ENCODE measurements at regions of chr12 and their contacts with region 1.

Region 1: DNA sequence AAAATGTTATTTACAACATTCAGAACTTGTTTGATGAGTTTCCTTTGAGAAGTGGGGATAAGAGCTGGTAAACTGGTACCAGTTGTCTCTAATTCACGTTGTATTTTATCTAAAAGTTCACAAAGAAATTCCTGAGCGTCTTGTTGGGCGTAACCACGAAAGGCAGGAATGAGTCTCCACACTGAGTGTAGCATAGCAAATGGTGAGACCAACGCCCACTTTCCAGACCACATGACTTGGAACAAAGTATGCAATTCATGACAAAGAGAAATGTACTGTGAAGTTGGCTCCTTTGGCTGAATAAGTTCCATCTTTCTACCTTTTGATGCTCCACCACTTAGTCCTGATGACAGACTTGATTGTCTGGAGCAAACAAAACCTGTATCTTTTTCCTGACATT is 18.4 kb downstream of the USP44 start:
- DNase-seq: no peak
- H3K4me3 ChIP-seq: no peak overlapping the region
- H3K4me3 Mint-ChIP-seq: no peak overlapping the region
- H3K27ac Mint-ChIP-seq: no peak overlapping the region
- H3K4me1 ChIP-seq: peaks cover 22% of the 10 kb centered on the region
- H3K4me1 Mint-ChIP-seq: peaks cover 28% of the 10 kb centered on the region
- H3K27me3 ChIP-seq: no peaks in the 10 kb centered on the region
- H3K27me3 Mint-ChIP-seq: no peaks in the 10 kb centered on the region
- CTCF ChIP-seq: no peak

Region 2: GRCh38 chr12:95072900-95073697 is 459.8 kb before region 1 on chr12 and contains the start of gene NR2C1:
- CTCF ChIA-PET with region 1: interaction called, 10 read pairs
- POLR2A ChIA-PET with region 1: no interaction called
- intact Hi-C with region 1: no loop called
- DNase-seq: peak; percentile 96 to 97
- H3K4me3 ChIP-seq: peak within 1 kb of the TSS; percentile 94
- H3K4me3 Mint-ChIP-seq: peak within 1 kb of the TSS; percentile 91
- H3K27ac Mint-ChIP-seq: peak within 1 kb of the TSS; percentile 94
- H3K4me1 ChIP-seq: peaks cover 5% of the 10 kb centered on the region; the same call in 1 of the 2 replicates
- H3K4me1 Mint-ChIP-seq: peaks cover 6% of the 10 kb centered on the region
- H3K27me3 ChIP-seq: no peaks in the 10 kb centered on the region
- H3K27me3 Mint-ChIP-seq: no peaks in the 10 kb centered on the region
- CTCF ChIP-seq: peak in 1 of 2 experiments; percentile 59
- total RNA-seq, gene NR2C1: 49.7 and 51.1 TPM in 2 replicates

Region 3: DNA sequence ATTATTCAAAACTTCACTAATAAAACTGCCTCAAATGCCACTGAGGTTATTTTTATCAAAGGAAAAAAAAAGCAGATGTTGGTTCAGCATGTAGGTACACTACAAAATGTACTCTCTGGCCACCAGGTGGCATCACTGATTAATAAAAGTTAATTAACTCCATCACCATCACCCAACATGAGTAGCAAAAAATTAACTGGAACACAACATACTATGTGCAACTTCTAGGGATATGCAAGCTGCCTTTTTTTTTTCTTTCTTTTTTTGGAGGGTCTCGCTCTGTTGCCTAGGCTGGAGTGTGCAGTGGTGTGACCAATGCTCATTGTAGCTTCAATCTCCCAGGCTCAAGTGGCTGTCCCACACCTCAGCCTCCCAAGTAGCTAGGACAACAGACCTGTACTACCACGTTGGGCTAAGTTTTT is 415.7 kb before region 1 on chr12:
- CTCF ChIA-PET with region 1: interaction called, 18 read pairs
- POLR2A ChIA-PET with region 1: no interaction called
- intact Hi-C with region 1: loop called (anchors 1 kb)
- DNase-seq: peak; percentile 57 to 68
- H3K4me3 ChIP-seq: no peak overlapping the region
- H3K4me3 Mint-ChIP-seq: no peak overlapping the region
- H3K27ac Mint-ChIP-seq: no peak overlapping the region
- H3K4me1 ChIP-seq: 0 out of 2 replicates have a peak, but pooled peaks cover 4% of the 10 kb centered on the region
- H3K4me1 Mint-ChIP-seq: no peaks in the 10 kb centered on the region
- H3K27me3 ChIP-seq: no peaks in the 10 kb centered on the region
- H3K27me3 Mint-ChIP-seq: no peaks in the 10 kb centered on the region
- CTCF ChIP-seq: peak; percentile 48 to 74

Region 4: GRCh38 chr12:95343461-95344230 is 189.2 kb before region 1 on chr12:
- CTCF ChIA-PET with region 1: interaction called, 11 read pairs
- POLR2A ChIA-PET with region 1: no interaction called
- intact Hi-C with region 1: no loop called
- DNase-seq: no peak
- H3K4me3 ChIP-seq: no peak overlapping the region
- H3K4me3 Mint-ChIP-seq: no peak overlapping the region
- H3K27ac Mint-ChIP-seq: peak overlapping the region; percentile 84
- H3K4me1 ChIP-seq: peaks cover 33% of the 10 kb centered on the region
- H3K4me1 Mint-ChIP-seq: peaks cover 36% of the 10 kb centered on the region
- H3K27me3 ChIP-seq: no peaks in the 10 kb centered on the region
- H3K27me3 Mint-ChIP-seq: no peaks in the 10 kb centered on the region
- CTCF ChIP-seq: no peak

Region 5: GRCh38 chr12:95473884-95474659 is 58.8 kb before region 1 on chr12 and contains the start of gene METAP2:
- CTCF ChIA-PET with region 1: interaction called, 10 read pairs
- POLR2A ChIA-PET with region 1: no interaction called
- intact Hi-C with region 1: no loop called
- DNase-seq: peak; percentile 97 to 98
- H3K4me3 ChIP-seq: peak within 1 kb of the TSS; percentile 99
- H3K4me3 Mint-ChIP-seq: peak within 1 kb of the TSS; percentile 93
- H3K27ac Mint-ChIP-seq: peak within 1 kb of the TSS; percentile 97
- H3K4me1 ChIP-seq: peaks cover 13% of the 10 kb centered on the region
- H3K4me1 Mint-ChIP-seq: peaks cover 27% of the 10 kb centered on the region
- H3K27me3 ChIP-seq: no peaks in the 10 kb centered on the region
- H3K27me3 Mint-ChIP-seq: no peaks in the 10 kb centered on the region
- CTCF ChIP-seq: no peak
- total RNA-seq, gene METAP2: 134 and 138 TPM in 2 replicates

Region 6: DNA sequence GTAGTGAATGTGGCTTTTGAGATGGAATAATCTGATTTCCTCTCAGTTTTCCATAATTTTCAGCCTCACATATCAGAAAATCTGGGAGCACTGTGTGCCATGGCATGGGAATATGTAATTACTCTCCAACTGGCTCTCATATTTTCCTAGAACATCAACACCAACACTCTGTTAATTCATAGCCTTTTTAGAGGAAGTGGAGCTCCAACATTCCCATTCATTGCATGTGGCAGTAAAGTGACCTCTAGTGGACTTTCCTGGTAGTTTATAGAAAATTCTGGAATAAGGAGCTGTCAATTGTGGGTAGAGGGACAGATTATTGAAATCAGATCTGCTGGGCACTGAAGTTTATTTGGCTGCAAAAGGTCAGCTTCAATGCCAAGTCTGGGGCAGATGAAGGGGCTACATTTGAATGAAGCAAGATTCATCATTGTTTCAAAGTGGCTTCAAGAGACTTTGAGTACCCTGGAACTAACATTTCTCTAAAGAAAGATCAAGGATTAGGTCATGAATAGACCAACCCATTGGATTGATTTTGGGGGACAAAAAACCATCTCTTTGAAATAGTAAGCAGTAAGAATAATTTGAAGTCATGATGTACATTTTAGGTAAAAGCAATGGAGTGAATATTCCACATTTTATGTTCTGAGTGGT is 42.1 kb after region 1 on chr12:
- CTCF ChIA-PET with region 1: interaction called, 27 read pairs
- POLR2A ChIA-PET with region 1: interaction called, 3 read pairs
- intact Hi-C with region 1: loop called (anchors 1 kb)
- DNase-seq: peak in 1 of 2 experiments; percentile 50
- H3K4me3 ChIP-seq: no peak overlapping the region
- H3K4me3 Mint-ChIP-seq: no peak overlapping the region
- H3K27ac Mint-ChIP-seq: no peak overlapping the region
- H3K4me1 ChIP-seq: no peaks in the 10 kb centered on the region
- H3K4me1 Mint-ChIP-seq: no peaks in the 10 kb centered on the region
- H3K27me3 ChIP-seq: no peaks in the 10 kb centered on the region
- H3K27me3 Mint-ChIP-seq: no peaks in the 10 kb centered on the region
- CTCF ChIP-seq: peak; percentile 57 to 73